Activated T-helper 1 cell treated with anti-CD3 and anti-CD28 coated beads, Interleukin-12 subunit alpha, Interleukin-12 subunit beta, Interleukin-2, Interleukin-4 antibody, amounts not matched to agents 30 ng/mL and 10 ng/mL and 1 ng/mL, durations not matched to agents 14 hours and 24 hours and 36 hours (primary cell): ENCODE measurements at regions of chr1 and their contacts with region 1.

Region 1: DNA sequence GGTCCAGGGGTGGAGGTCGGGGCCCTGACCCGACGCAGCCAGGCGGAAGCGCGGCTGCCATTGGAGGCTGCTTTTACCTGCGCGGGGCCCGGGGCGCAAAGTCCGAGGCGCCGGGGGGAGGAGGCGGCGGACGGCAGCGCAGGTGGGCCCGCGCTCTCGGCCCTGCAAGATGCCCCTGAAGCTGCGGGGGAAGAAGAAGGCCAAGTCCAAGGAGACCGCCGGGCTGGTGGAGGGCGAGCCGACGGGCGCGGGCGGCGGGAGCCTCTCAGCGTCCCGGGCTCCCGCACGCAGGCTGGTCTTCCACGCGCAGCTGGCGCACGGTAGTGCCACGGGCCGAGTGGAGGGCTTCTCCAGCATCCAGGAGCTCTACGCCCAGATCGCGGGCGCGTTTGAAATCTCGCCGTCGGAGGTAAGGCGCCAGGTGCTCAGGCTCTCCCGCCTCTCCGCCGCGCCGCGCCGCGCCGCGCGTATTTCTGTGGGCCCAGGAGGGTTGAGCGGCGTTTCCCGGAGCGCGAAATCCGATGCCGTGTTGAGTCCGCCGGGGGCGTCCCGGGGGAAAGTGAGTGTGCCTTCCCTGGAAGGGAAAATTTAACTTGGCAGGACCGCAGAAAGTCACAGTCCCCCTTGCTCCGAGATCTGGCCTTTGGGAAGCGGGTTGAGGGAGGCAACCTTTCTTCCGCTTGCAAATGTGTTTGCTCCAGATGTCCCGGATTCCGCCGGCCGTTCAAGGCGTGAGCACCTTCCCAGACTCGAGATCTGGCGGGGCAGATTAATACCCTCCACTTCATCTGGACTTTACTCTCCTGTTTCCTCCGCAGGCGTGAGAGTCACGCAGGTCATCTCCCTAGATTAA is at the start of gene GIPC2:
- DNase-seq: peak; percentile 5
- H3K4me3 Mint-ChIP-seq: peak within 1 kb of the TSS; percentile 74
- H3K27ac Mint-ChIP-seq: no peak within 1 kb of the TSS
- H3K4me1 Mint-ChIP-seq: peaks cover 28% of the 10 kb centered on the region
- H3K27me3 Mint-ChIP-seq: peaks cover 54% of the 10 kb centered on the region
- total RNA-seq, gene GIPC2: 0.05 TPM in 1 of 2 replicates, not detected in the other

Region 2: DNA sequence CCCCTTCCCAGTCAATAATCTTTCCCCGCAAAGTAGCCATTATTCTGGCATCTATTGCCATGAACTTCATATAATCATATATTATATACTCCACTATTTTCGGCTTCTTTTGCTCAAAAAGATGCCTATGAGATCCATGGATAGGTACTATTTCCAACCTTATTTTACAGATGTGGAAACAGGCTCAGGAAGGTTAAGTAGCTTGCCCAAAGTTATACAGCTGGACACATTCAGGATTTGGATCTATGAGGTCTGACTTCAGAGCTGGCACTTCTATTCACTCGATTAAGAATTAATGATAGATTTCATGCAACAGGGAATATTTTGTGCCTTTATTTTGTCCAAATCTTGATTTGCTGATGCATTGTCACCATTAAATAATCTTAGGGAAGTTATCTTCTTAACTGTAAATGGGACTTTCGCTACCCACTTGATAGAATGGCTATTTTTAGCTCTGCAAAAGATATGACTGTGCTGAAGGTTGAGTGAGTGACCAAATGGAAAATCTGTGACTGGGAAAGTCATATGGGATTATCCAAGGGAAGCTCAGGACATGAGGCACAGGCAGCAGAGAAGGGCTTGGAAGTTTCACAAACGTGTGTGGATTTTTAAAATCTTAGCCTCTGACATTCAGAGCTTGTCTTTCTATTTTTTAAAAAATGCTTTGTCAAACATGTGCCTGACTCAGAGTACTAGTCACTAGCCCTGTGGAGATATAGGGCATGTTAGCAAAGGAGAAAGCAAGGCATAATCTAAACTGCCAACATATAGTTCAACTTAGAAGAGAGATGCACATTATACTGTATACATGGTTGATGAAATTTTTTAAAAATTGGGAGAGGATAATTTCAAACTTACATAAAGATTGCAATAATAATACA is 36.1 kb after region 1 on chr1:
- intact Hi-C with region 1: loop called (anchors 5 kb)
- DNase-seq: no peak
- H3K4me3 Mint-ChIP-seq: no peak overlapping the region
- H3K27ac Mint-ChIP-seq: no peak overlapping the region
- H3K4me1 Mint-ChIP-seq: peaks cover 22% of the 10 kb centered on the region
- H3K27me3 Mint-ChIP-seq: peaks cover 12% of the 10 kb centered on the region